ENCODE measurements at regions of chr2 and their contacts with region 1.

Region 1: GRCh38 chr2:201257956-201258665 is 2.2 kb upstream of the CASP8 start:
- DNase-seq: peak; percentile 98
- ATAC-seq: peak; percentile 71
- H3K4me3 Mint-ChIP-seq: peak overlapping the region; percentile 81
- H3K27ac Mint-ChIP-seq: peak overlapping the region; percentile 94
- H3K4me1 Mint-ChIP-seq: peaks cover 74% of the 10 kb centered on the region
- H3K27me3 Mint-ChIP-seq: no peaks in the 10 kb centered on the region

Region 2: GRCh38 chr2:201021914-201022313 is 236.2 kb before region 1 on chr2:
- CTCF ChIA-PET with region 1: no interaction called
- POLR2A ChIA-PET with region 1: no interaction called
- DNase-seq: no peak
- ATAC-seq: peak; percentile 36
- H3K4me3 Mint-ChIP-seq: no peak overlapping the region
- H3K27ac Mint-ChIP-seq: peak overlapping the region; percentile 62
- H3K4me1 Mint-ChIP-seq: peaks cover 20% of the 10 kb centered on the region
- H3K27me3 Mint-ChIP-seq: no peaks in the 10 kb centered on the region

Region 3: GRCh38 chr2:201090574-201090973 is 167.5 kb before region 1 on chr2:
- CTCF ChIA-PET with region 1: no interaction called
- POLR2A ChIA-PET with region 1: no interaction called
- DNase-seq: no peak
- ATAC-seq: no peak
- H3K4me3 Mint-ChIP-seq: no peak overlapping the region
- H3K27ac Mint-ChIP-seq: no peak overlapping the region
- H3K4me1 Mint-ChIP-seq: peaks cover 2% of the 10 kb centered on the region
- H3K27me3 Mint-ChIP-seq: no peaks in the 10 kb centered on the region

Region 4: GRCh38 chr2:201208563-201209252 is 49.4 kb before region 1 on chr2:
- CTCF ChIA-PET with region 1: no interaction called
- POLR2A ChIA-PET with region 1: no interaction called
- DNase-seq: no peak
- ATAC-seq: no peak
- H3K4me3 Mint-ChIP-seq: no peak overlapping the region
- H3K27ac Mint-ChIP-seq: no peak overlapping the region
- H3K4me1 Mint-ChIP-seq: peaks cover 28% of the 10 kb centered on the region
- H3K27me3 Mint-ChIP-seq: no peaks in the 10 kb centered on the region

Region 5: GRCh38 chr2:201242571-201243277 is 15.4 kb before region 1 on chr2:
- CTCF ChIA-PET with region 1: interaction called, 45 read pairs
- POLR2A ChIA-PET with region 1: interaction called, 221 read pairs
- DNase-seq: no peak
- ATAC-seq: no peak
- H3K4me3 Mint-ChIP-seq: no peak overlapping the region
- H3K27ac Mint-ChIP-seq: peak overlapping the region; percentile 52
- H3K4me1 Mint-ChIP-seq: peaks cover 20% of the 10 kb centered on the region
- H3K27me3 Mint-ChIP-seq: no peaks in the 10 kb centered on the region

Region 6: DNA sequence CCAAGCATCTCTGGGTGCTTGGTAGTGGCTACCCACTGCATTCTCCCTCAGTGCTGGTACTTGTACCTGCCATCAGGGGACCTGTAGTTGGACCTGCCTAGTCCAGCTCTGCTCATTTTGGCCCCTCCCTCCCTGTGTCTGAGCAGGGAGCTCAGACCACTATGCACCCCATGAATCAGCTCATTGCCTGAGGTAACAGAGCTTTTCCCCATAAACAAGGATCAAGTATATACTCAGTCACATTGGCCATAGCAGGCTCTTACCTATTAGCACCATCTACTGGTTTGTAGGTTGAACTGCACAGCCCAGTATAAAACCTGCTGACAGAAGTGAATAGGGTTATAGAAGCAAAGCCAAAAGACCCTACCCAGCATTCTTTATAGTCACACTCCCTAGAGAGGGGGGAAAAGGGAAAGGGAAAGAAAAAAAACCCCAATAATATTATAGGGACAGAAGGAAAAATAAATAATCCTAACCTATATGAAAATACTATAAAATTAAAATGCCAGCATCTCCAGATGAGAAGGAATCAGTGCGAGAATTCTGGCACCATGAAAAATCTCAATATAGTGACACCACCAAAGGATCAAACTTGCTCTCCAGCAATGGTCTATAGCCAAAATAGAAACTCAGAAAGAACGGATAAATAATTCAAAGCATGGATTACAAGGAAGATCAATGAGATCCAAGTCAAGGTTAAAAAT is 105.9 kb after region 1 on chr2:
- CTCF ChIA-PET with region 1: interaction called, 14 read pairs
- POLR2A ChIA-PET with region 1: interaction called, 3 read pairs
- DNase-seq: peak; percentile 49
- ATAC-seq: peak; percentile 83
- H3K4me3 Mint-ChIP-seq: no peak overlapping the region
- H3K27ac Mint-ChIP-seq: peak overlapping the region; percentile 73
- H3K4me1 Mint-ChIP-seq: peaks cover 41% of the 10 kb centered on the region
- H3K27me3 Mint-ChIP-seq: no peaks in the 10 kb centered on the region

Region 7: GRCh38 chr2:201414099-201415023 is 156.2 kb after region 1 on chr2:
- CTCF ChIA-PET with region 1: no interaction called
- POLR2A ChIA-PET with region 1: interaction called, 11 read pairs
- DNase-seq: no peak
- ATAC-seq: peak; percentile 85
- H3K4me3 Mint-ChIP-seq: no peak overlapping the region
- H3K27ac Mint-ChIP-seq: no peak overlapping the region
- H3K4me1 Mint-ChIP-seq: peaks cover 12% of the 10 kb centered on the region
- H3K27me3 Mint-ChIP-seq: no peaks in the 10 kb centered on the region

Measured in activated CD8-positive, alpha-beta T cell treated with anti-CD3 and anti-CD28 coated beads, Interleukin-2, amount 10 ng/mL, durations not matched to agents 7 days and 5 days (primary cell).